Naive thymus-derived CD8-positive, alpha-beta T cell (primary cell): ENCODE measurements at regions of chr2 and their contacts with region 1.

Region 1: DNA sequence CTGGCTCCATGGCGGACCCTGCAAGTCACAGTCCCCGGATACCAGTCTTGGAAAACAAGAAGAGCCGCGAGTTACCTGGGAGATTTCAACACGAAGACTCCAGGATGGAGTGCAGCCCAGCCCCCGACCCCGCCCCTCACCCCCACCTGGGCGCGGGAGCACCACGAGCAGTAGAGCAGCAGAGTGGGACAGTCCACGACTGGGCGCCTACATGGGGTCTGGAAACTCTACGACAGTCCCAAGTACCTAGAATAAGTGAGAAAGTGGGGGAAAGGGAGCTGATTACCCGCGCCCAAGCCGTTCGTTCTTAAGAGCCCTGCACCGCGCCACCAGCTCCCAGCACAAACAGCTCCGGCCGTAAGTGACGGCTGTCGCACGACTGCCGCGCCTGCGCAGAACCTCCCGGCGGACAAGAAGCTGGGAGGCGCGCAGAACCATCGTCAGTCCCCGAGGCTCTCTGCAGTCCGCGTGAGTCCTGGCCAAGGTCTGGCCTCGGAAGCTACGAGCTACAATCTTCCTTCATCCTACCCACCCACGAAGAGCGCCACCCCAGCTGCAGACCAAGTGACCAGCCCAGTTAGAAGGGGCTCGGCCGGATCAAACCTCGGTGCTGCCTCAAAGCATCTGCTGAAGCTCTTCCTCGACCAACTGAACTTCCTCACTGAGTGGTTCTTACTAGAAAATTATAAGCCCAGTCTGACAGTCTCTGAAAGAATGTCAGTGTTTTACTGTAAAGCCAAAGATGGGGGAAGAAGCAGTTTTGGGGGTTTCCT is at the start of gene DPY30:
- DNase-seq: peak; percentile 82 to 94 (median 89)
- ATAC-seq: peak; percentile 91 to 96
- H3K4me3 Mint-ChIP-seq: peak within 1 kb of the TSS; percentile 84 to 97 (median 92)
- H3K27ac Mint-ChIP-seq: peak within 1 kb of the TSS; percentile 91 to 98 (median 95)
- H3K4me1 Mint-ChIP-seq: peaks cover 3 to 25% (median 18%) of the 10 kb centered on the region in 4 donors
- H3K27me3 Mint-ChIP-seq: peaks cover 0 to 3% (median 0%) of the 10 kb centered on the region in 5 donors
- polyA plus RNA-seq, gene DPY30: 151 to 179 (median 159) TPM

Region 2: GRCh38 chr2:32010670-32011484 is 28.8 kb before region 1 on chr2 and contains the start of gene MEMO1:
- POLR2A ChIA-PET with region 1: interaction called, 19 read pairs
- DNase-seq: peak; percentile 79 to 96 (median 92)
- ATAC-seq: peak; percentile 75 to 81
- H3K4me3 Mint-ChIP-seq: peak within 1 kb of the TSS; percentile 86 to 94 (median 90)
- H3K27ac Mint-ChIP-seq: peak within 1 kb of the TSS; percentile 89 to 98 (median 95)
- H3K4me1 Mint-ChIP-seq: peaks cover 23 to 49% (median 46%) of the 10 kb centered on the region in 4 donors
- H3K27me3 Mint-ChIP-seq: no peaks in the 10 kb centered on the region
- polyA plus RNA-seq, gene MEMO1: 23.7 to 26.2 (median 25.2) TPM